ENCODE measurements at regions of chr9 and their contacts with region 1.

Region 1: GRCh38 chr9:94783102-94783664 is 56.7 kb downstream of the AOPEP start:
- DNase-seq: peak; percentile 58
- ATAC-seq: peak; percentile 31
- H3K4me3 Mint-ChIP-seq: no peak overlapping the region
- H3K27ac Mint-ChIP-seq: no peak overlapping the region
- H3K4me1 Mint-ChIP-seq: peaks cover 14% of the 10 kb centered on the region
- H3K27me3 Mint-ChIP-seq: no peaks in the 10 kb centered on the region

Region 2: DNA sequence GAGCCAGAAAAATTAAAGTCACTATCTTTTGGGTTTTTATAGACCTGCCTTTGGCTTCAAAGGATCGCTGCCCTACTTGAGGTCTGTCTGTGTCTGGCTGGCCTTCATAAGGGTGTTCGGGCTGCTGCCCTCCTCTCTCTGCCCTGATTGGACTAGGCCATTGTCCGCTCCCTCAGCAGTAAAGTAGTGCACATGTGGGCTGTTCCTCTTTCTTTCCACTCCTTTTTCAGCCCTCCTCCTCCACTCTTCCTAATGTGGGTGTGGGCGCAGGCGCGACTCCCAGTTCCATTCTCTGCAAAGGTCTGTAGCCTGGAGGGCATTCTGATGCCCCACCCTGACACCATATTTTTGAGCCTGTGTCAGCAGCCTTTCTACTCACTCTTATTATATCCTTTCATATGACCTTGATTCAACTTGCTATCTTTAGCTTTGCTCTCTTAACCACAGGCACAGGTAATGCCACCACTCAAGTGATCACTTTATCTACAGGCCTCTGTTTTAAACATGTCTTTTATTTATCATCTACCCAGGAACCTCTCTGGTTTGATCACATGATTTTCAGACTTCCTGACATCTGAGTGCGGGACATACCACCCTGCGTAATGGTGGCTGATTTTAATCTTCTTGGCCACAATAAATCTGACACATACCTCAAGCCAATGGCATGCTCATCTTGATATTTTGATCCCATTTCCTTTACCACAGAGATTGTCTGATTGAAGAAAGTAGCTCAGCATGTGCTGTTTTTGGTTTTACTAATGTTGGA is 87.8 kb after region 1 on chr9:
- CTCF ChIA-PET with region 1: interaction called, 3 read pairs
- POLR2A ChIA-PET with region 1: no interaction called
- intact Hi-C with region 1: loop called in 1 of 2 experiments (anchors 5 kb)
- DNase-seq: peak; percentile 42
- ATAC-seq: peak; percentile 63
- H3K4me3 Mint-ChIP-seq: no peak overlapping the region
- H3K27ac Mint-ChIP-seq: peak overlapping the region; percentile 79
- H3K4me1 Mint-ChIP-seq: peaks cover 45% of the 10 kb centered on the region
- H3K27me3 Mint-ChIP-seq: no peaks in the 10 kb centered on the region

Region 3: DNA sequence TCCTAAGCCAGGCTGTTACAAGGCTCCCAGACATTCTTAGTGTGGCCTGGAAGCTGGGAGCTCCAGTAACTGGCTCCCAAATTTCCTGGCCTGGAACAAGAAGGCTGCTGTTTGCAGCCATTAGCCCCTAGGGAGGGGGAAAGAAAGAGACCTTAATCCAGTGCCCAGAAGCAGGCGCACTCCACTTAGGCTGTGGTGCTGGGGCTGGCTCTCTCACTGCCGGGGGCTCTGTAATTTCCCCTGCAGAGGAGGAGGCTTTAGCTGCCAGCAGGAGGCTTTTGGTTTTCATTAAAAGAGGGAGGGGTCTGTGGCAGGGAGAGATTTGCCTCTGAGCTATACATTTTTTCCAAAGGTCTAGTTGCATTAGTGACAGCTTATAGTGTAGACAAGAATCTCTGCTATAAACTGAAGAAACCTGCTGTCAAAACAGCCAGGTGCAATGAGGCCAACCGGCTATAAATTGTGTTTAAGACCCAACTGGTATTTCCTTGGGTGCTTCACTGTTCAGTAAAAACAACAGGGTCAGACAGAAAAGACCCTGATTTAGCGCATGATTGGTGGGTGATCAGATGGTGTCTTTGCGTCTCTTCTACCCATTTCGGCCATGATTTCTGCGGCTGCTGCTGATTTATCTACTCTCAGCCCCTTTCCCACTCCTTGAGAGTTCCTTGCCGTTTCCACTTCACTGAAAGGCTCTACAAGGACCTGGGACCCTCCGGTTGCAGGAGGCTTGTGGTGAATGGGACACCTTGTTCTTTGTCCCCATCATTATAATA is 198.0 kb after region 1 on chr9:
- CTCF ChIA-PET with region 1: no interaction called
- POLR2A ChIA-PET with region 1: no interaction called
- intact Hi-C with region 1: no loop called
- DNase-seq: no peak
- ATAC-seq: no peak
- H3K4me3 Mint-ChIP-seq: no peak overlapping the region
- H3K27ac Mint-ChIP-seq: no peak overlapping the region
- H3K4me1 Mint-ChIP-seq: peaks cover 9% of the 10 kb centered on the region
- H3K27me3 Mint-ChIP-seq: no peaks in the 10 kb centered on the region

Region 4: GRCh38 chr9:95004411-95005277 is 221.5 kb after region 1 on chr9:
- CTCF ChIA-PET with region 1: no interaction called
- POLR2A ChIA-PET with region 1: no interaction called
- intact Hi-C with region 1: loop called (anchors 10 kb)
- DNase-seq: peak; percentile 57
- ATAC-seq: peak; percentile 65
- H3K4me3 Mint-ChIP-seq: peak overlapping the region; percentile 69
- H3K27ac Mint-ChIP-seq: no peak overlapping the region
- H3K4me1 Mint-ChIP-seq: peaks cover 19% of the 10 kb centered on the region
- H3K27me3 Mint-ChIP-seq: peaks cover 28% of the 10 kb centered on the region

Region 5: GRCh38 chr9:95048225-95049087 is 265.3 kb after region 1 on chr9:
- CTCF ChIA-PET with region 1: no interaction called
- POLR2A ChIA-PET with region 1: no interaction called
- intact Hi-C with region 1: loop called in 1 of 2 experiments (anchors 2 kb)
- DNase-seq: peak; percentile 65
- ATAC-seq: peak; percentile 83
- H3K4me3 Mint-ChIP-seq: peak overlapping the region; percentile 69
- H3K27ac Mint-ChIP-seq: no peak overlapping the region
- H3K4me1 Mint-ChIP-seq: peaks cover 8% of the 10 kb centered on the region
- H3K27me3 Mint-ChIP-seq: peaks cover 14% of the 10 kb centered on the region

Region 6: GRCh38 chr9:95167998-95168397 is 384.8 kb after region 1 on chr9:
- CTCF ChIA-PET with region 1: interaction called, 4 read pairs
- POLR2A ChIA-PET with region 1: no interaction called
- intact Hi-C with region 1: loop called in 1 of 2 experiments (anchors 5 kb)
- DNase-seq: peak; percentile 82
- ATAC-seq: peak; percentile 87
- H3K4me3 Mint-ChIP-seq: no peak overlapping the region
- H3K27ac Mint-ChIP-seq: no peak overlapping the region
- H3K4me1 Mint-ChIP-seq: peaks cover 16% of the 10 kb centered on the region
- H3K27me3 Mint-ChIP-seq: no peaks in the 10 kb centered on the region

Measured in activated CD4-positive, alpha-beta T cell treated with anti-CD3 and anti-CD28 coated beads for 36 hours (primary cell).